ENCODE measurements at regions of chr14 and their contacts with region 1.

Region 1: GRCh38 chr14:74362361-74362915 is 14.2 kb downstream of the VRTN start:
- DNase-seq: peak; percentile 35
- H3K4me3 Mint-ChIP-seq: no peak overlapping the region
- H3K27ac Mint-ChIP-seq: no peak overlapping the region
- H3K4me1 Mint-ChIP-seq: no peaks in the 10 kb centered on the region
- H3K27me3 Mint-ChIP-seq: peaks cover 9% of the 10 kb centered on the region

Region 2: GRCh38 chr14:74333909-74334308 is 28.5 kb before region 1 on chr14:
- intact Hi-C with region 1: no loop called
- DNase-seq: no peak
- H3K4me3 Mint-ChIP-seq: no peak overlapping the region
- H3K27ac Mint-ChIP-seq: no peak overlapping the region
- H3K4me1 Mint-ChIP-seq: no peaks in the 10 kb centered on the region
- H3K27me3 Mint-ChIP-seq: peaks cover 2% of the 10 kb centered on the region

Region 3: DNA sequence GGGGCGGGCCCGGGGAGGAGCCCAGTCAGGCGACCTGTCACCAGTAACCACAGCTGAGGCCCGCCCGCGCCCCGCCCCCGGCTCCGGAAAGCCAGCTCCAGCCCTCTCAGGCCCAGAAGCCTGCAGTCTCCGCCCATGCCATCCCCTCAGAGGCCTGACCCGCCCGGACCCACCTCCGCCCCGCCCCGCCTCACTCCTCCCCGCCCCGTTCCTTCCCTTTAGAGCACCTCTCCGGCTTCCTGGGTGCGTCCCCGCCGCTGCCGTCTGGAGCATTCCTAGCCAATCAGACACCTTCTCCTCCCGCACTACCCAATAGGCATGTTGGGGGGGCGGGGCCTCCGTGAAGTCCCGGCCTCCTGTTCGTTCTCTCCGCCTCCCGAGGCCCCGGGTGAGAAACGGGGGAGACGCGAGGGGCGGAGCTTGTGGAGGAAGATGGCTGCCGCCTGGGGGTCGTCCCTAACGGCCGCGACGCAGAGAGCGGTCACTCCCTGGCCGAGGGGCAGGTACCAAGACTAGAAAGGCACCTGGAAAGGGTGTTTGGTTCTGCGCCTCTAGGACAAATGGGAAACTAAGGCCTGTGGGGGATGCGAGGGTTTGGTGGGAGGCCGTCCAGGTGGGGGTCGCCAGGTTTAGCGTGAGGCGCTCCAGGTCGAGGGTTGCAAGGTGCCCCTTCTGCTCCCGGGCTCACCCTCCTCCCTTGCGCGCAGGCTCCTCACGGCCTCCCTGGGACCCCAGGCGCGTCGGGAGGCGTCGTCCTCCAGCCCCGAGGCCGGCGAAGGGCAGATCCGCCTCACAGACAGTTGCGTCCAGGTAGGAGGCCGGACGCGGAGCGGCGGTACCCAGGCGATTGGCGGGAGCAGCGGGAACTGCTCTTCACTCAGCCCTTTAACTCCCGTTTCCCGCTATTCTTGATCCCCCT is 131.2 kb after region 1 on chr14 and contains the start of gene ISCA2:
- intact Hi-C with region 1: loop called (anchors 1 kb)
- DNase-seq: peak; percentile 99
- H3K4me3 Mint-ChIP-seq: peak within 1 kb of the TSS; percentile 93
- H3K27ac Mint-ChIP-seq: peak within 1 kb of the TSS; percentile 89
- H3K4me1 Mint-ChIP-seq: peaks cover 21% of the 10 kb centered on the region
- H3K27me3 Mint-ChIP-seq: no peaks in the 10 kb centered on the region
- total RNA-seq, gene ISCA2: 23.9 and 25.3 TPM in 2 replicates

Measured in activated T-helper 2 cell treated with anti-CD3 and anti-CD28 coated beads, Interferon-gamma antibody, Interleukin-2, Interleukin-4, amounts not matched to agents 10 μg/mL and 5 μg/mL and 100 μg/mL, durations not matched to agents 14 hours and 24 hours and 36 hours (primary cell).